CD8-positive, alpha-beta T cell (primary cell): ENCODE measurements at regions of chr2 and their contacts with region 1.

Region 1: DNA sequence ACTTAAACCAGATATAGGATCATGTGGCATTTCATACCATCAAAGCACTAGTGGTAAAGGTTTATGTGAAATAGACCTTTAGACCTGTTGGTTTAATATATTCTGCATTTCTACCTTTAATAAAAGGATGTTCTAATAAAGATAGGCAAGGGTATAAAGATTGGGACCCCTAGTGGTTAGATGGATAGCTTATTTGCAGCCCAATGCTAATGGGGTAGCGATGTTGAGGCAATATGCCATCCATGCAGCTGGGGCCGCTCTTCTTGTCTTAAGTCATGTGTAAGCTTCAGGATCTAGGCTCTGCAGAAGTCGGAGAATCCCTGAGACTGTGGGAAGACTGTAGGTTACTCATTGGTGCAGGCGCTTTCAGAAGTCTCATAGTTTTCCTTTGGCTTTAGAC is 114.9 kb downstream of the ICOS start:
- DNase-seq: peak in 2 of 9 experiments; percentile 30 to 39
- ATAC-seq: no peak
- H3K4me3 ChIP-seq: no peak overlapping the region
- H3K4me3 Mint-ChIP-seq: no peak overlapping the region
- H3K27ac ChIP-seq: no peak overlapping the region
- H3K27ac Mint-ChIP-seq: no peak overlapping the region
- H3K4me1 ChIP-seq: no peaks in the 10 kb centered on the region
- H3K4me1 Mint-ChIP-seq: peaks cover 13% of the 10 kb centered on the region
- H3K27me3 ChIP-seq: no peaks in the 10 kb centered on the region
- H3K27me3 Mint-ChIP-seq: no peaks in the 10 kb centered on the region
- CTCF ChIP-seq: peak; percentile 21

Region 2: GRCh38 chr2:203928849-203929248 is 122.6 kb before region 1 on chr2:
- CTCF ChIA-PET with region 1: interaction called, 28 read pairs
- POLR2A ChIA-PET with region 1: no interaction called
- intact Hi-C with region 1: loop called (anchors 1 to 2 kb)
- DNase-seq: peak in 2 of 9 experiments; percentile 43 to 59
- ATAC-seq: peak; percentile 42
- H3K4me3 ChIP-seq: no peak overlapping the region
- H3K4me3 Mint-ChIP-seq: no peak overlapping the region
- H3K27ac ChIP-seq: no peak overlapping the region
- H3K27ac Mint-ChIP-seq: no peak overlapping the region
- H3K4me1 ChIP-seq: peaks cover 15% of the 10 kb centered on the region
- H3K4me1 Mint-ChIP-seq: peaks cover 33% of the 10 kb centered on the region
- H3K27me3 ChIP-seq: no peaks in the 10 kb centered on the region
- H3K27me3 Mint-ChIP-seq: no peaks in the 10 kb centered on the region
- CTCF ChIP-seq: peak; percentile 52